Dorsolateral prefrontal cortex (tissue), 120 donors: ENCODE measurements at regions of chr6 and their contacts with region 1.

Region 1: GRCh38 chr6:129370268-129370916 is 339.6 kb downstream of the ARHGAP18 start:
- DNase-seq: peak in 6 of 10 donors; percentile 11 to 65 (median 46)
- H3K4me3 ChIP-seq: peak overlapping the region in 20 of 59 donors; percentile 0 to 41 (median 17)
- H3K27ac ChIP-seq: peak overlapping the region in 21 of 59 donors; percentile 19 to 55 (median 46)
- H3K27me3 ChIP-seq: no peaks in the 10 kb centered on the region
- CTCF ChIP-seq: peak; percentile 69 to 93 (median 85)

Region 2: GRCh38 chr6:129133770-129134192 is 236.6 kb before region 1 on chr6:
- intact Hi-C with region 1: loop called in 1 of 2 experiments (anchors 2 kb)
- DNase-seq: no peak
- H3K4me3 ChIP-seq: peak overlapping the region in 7 of 59 donors; percentile 2 to 28 (median 15)
- H3K27ac ChIP-seq: peak overlapping the region in 55 of 59 donors; percentile 24 to 89 (median 76)
- H3K27me3 ChIP-seq: no peaks in the 10 kb centered on the region
- CTCF ChIP-seq: no peak